ENCODE measurements at regions of chr11 and their contacts with region 1.

Region 1: GRCh38 chr11:100575870-100576705 is 111.0 kb upstream of the ARHGAP42 start:
- DNase-seq: no peak
- H3K4me3 ChIP-seq: no peak overlapping the region
- H3K27ac ChIP-seq: no peak overlapping the region
- H3K4me1 ChIP-seq: no peaks in the 10 kb centered on the region
- H3K27me3 ChIP-seq: no peaks in the 10 kb centered on the region
- CTCF ChIP-seq: peak; percentile 53 to 77 (median 70)
- POLR2A ChIP-seq: no peak

Region 2: GRCh38 chr11:100119176-100119575 is 456.9 kb before region 1 on chr11:
- intact Hi-C with region 1: no loop called
- DNase-seq: no peak
- H3K4me3 ChIP-seq: no peak overlapping the region
- H3K27ac ChIP-seq: no peak overlapping the region
- H3K4me1 ChIP-seq: no peaks in the 10 kb centered on the region
- H3K27me3 ChIP-seq: no peaks in the 10 kb centered on the region
- CTCF ChIP-seq: no peak
- POLR2A ChIP-seq: no peak

Region 3: DNA sequence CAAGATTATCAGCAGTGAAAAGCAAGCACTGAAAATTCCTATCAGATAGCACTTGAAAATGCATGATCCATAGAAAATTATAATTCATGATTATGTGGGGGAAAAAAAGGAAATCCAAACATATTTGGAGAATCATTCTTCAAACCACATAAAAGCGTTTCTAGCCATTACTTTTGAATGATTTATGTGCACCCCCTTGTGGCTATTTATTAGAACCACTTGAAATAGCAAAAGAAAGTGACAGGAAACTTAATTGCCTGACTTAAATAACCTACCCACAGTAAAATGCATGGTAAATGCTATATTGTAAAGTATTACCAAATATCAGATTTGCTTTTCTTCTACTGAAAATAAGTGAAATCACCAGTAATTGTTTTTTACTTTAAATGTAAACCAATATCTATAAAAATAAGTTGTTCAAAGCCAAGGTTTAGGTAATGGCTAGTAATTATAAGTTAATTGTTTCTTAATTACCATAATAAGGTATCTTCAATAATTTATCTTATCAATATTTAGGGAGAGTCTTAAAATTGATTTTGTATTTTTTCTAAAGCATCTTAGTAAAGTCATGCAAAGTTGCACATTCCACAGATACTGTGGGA is 279.5 kb after region 1 on chr11:
- intact Hi-C with region 1: loop called (anchors 5 kb)
- DNase-seq: no peak
- H3K4me3 ChIP-seq: no peak overlapping the region
- H3K27ac ChIP-seq: no peak overlapping the region
- H3K4me1 ChIP-seq: no peaks in the 10 kb centered on the region
- H3K27me3 ChIP-seq: no peaks in the 10 kb centered on the region
- CTCF ChIP-seq: peak; percentile 50 to 55 (median 52)
- POLR2A ChIP-seq: no peak

Measured in vagina (tissue), 2 donors.